Activated CD4-positive, alpha-beta memory T cell treated with anti-CD3 and anti-CD28 coated beads for 36 hours (primary cell): ENCODE measurements at regions of chr3 and their contacts with region 1.

Region 1: DNA sequence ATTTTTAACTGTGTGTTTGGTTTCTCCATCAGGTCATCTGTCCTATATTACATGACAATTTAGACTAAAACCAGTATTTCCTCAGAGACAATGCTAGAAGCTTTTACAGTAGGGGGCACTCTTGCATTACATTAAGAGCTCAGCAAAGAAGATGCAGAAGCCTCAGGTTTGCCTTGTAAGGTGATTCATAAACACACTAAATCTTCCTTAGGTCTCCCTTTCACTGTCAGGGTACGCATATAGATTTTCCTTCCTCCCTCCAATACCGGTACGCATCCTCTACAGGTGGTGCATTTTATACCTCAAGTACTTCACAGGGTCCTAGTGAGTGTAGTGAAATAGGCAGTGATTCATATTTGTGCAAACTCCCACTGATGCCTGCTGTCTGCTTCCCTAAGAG is 46.5 kb downstream of the CD86 start:
- DNase-seq: no peak
- H3K4me3 Mint-ChIP-seq: peak overlapping the region; percentile 7
- H3K27ac Mint-ChIP-seq: peak overlapping the region; percentile 78
- H3K4me1 Mint-ChIP-seq: peaks cover 45% of the 10 kb centered on the region
- H3K27me3 Mint-ChIP-seq: no peaks in the 10 kb centered on the region

Region 2: DNA sequence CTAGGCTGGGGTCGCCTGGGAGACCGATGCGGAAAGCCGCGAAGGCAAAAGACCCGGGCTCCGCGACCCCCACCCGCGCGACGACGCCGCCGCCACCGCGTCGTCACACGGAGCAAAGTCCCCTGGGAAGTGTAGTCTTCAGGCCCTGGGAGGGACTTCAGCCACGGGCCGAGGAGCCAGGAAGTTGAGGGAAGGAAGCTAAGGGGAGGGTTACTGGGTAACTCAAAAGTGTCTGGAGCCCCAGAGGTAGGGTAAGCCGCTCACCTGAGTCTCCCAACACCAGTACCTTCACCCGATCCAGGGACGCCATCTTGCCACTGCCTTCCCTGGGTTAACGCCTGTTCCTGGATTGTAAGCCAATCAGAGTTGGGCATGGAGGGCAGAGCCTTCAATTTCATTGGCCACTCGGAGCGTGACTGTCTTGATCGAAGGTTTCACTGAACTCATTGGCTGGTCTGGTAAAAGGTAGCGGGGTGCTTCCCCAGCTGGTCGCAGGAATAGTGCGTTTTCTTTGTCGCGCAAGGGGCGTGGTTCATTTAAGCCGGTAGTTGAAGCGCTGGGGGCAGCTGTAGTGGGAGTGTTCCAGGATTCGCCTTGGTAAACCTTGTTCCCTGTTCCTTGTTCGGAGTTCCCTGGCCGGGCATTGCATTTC is 1359.3 kb before region 1 on chr3 and contains the starts of genes GTF2E1 and RABL3:
- CTCF ChIA-PET with region 1: no interaction called
- POLR2A ChIA-PET with region 1: no interaction called
- intact Hi-C with region 1: loop called (anchors 5 kb)
- DNase-seq: peak; percentile 98
- H3K4me3 Mint-ChIP-seq: peak within 1 kb of the TSS; percentile 96
- H3K27ac Mint-ChIP-seq: peak within 1 kb of the TSS; percentile 94
- H3K4me1 Mint-ChIP-seq: peaks cover 28% of the 10 kb centered on the region
- H3K27me3 Mint-ChIP-seq: peaks cover 2% of the 10 kb centered on the region
- total RNA-seq, gene GTF2E1: 18.4 to 19.8 TPM
- total RNA-seq, gene RABL3: 28.7 to 30.0 TPM

Region 3: DNA sequence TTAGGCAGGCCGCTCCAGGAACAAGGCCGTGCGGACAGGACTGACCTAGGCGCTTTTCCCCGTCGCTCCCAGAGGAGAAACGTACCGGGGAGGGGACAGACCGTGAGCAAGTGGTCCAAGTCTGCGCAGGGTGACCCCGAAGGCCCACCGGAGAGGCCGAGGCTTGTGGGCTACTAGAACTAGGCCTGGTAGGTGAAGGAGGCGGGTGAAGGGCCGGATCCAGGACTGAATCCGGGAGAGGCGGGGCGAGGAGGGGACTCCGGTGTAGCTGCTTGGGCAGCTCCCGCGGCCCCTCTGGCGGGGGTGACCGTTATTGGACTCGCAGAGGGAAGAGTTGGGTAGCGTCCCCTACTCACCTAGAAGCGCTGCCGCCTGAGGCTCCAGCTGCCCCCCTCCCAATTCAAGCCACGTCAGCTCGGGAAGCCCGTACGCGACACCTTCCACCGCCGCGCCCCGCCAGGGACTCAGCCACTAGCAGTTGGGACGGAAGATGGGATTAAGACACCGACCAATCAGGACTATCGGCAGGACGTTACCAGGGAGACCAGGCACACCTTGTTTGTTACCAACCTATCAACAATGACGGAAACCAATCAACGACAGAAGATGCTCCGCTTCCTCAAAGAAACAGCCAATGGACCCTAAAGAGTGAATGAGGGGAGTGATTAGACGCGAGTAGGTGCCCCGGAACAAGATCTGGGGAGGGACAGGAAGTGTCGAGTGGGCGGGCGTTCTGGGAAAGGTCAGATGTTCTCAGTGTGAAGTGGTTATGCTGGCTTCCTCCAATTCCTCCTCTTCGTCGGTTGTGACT is 352.2 kb before region 1 on chr3 and contains the start of gene GOLGB1:
- CTCF ChIA-PET with region 1: interaction called, 3 read pairs
- POLR2A ChIA-PET with region 1: no interaction called
- intact Hi-C with region 1: loop called (anchors 1 kb)
- DNase-seq: peak; percentile 97
- H3K4me3 Mint-ChIP-seq: no peak within 1 kb of the TSS
- H3K27ac Mint-ChIP-seq: no peak within 1 kb of the TSS
- H3K4me1 Mint-ChIP-seq: peaks cover 10% of the 10 kb centered on the region
- H3K27me3 Mint-ChIP-seq: no peaks in the 10 kb centered on the region
- total RNA-seq, gene GOLGB1: 22.7 to 26.0 TPM

Region 4: GRCh38 chr3:122123850-122124249 is 22.2 kb after region 1 on chr3:
- CTCF ChIA-PET with region 1: no interaction called
- POLR2A ChIA-PET with region 1: no interaction called
- intact Hi-C with region 1: loop called (anchors 2 kb)
- DNase-seq: peak; percentile 45
- H3K4me3 Mint-ChIP-seq: no peak overlapping the region
- H3K27ac Mint-ChIP-seq: peak overlapping the region; percentile 31
- H3K4me1 Mint-ChIP-seq: peaks cover 17% of the 10 kb centered on the region
- H3K27me3 Mint-ChIP-seq: peaks cover 10% of the 10 kb centered on the region

Region 5: DNA sequence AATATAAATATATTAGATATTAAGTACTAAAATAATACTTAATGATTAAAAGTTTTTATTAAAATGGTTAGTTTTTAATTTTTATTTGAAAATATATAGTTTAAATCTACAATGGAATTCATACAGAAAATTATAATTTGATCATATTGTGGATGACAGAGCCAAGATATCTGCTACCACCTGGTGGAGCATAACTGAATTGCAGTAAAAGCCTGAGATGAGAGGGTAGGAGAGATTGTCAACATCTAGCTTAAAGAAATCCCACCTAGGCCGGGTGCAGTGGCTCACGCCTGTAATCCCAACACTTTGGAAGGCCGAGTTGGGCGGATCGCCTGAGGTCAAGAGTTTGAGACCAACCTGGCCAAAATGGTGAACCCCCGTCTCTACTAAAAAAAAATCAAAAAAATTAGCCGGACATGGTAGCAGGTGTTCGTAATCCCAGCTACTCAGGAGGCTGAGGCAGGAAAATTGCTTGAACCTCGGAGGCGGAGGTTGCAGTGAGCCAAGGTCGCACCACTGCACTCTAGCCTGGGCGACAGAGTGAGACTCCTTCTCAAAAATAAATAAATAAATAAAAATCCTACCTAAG is 198.3 kb after region 1 on chr3:
- CTCF ChIA-PET with region 1: interaction called, 12 read pairs
- POLR2A ChIA-PET with region 1: interaction called, 6 read pairs
- intact Hi-C with region 1: loop called (anchors 1 kb)
- DNase-seq: no peak
- H3K4me3 Mint-ChIP-seq: no peak overlapping the region
- H3K27ac Mint-ChIP-seq: no peak overlapping the region
- H3K4me1 Mint-ChIP-seq: peaks cover 18% of the 10 kb centered on the region
- H3K27me3 Mint-ChIP-seq: no peaks in the 10 kb centered on the region

Region 6: DNA sequence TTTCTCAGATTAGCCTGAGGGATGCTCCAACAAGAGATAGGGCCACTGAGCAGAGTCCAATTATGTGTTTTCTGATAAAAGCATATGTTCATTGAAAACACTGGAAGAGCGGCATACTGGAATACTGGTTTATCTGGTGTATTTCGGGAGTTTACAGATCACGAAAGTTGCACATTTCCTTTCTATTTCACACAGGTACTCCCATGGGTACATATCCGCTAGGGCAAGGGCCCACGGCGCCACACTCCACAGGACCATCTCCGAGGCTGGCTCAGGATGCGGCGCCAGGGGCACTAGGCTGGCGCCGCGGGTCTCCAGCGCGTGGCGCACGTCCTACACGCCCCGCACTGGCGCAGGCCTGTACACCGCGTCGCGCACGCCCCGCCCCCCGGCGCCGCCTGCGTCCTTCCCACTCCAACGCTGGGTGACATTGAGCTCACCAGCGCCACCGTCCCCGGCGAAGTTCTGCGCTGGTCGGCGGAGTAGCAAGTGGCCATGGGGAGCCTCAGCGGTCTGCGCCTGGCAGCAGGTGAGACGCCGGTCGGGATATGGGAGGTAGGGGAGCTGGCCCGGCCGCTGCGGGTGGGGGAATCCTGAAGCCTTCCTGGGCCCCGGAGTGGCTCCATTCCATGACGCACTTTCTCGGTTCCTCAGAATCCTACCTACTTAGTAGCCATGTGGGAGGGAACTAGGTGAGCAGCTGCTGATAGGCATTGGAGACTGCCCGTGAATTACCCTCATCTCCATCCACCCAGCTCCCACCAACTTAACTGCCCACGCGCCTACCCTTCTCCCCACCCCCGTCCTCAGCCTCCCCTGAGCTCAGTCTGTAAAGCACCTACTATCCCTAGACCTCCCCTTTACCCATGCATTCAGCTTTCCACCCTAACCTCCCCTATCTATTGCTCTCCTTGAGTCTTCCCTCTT is 282.4 kb after region 1 on chr3 and contains the start of gene FAM162A:
- CTCF ChIA-PET with region 1: interaction called, 14 read pairs
- POLR2A ChIA-PET with region 1: no interaction called
- intact Hi-C with region 1: loop called (anchors 1 kb)
- DNase-seq: peak; percentile 95
- H3K4me3 Mint-ChIP-seq: peak within 1 kb of the TSS; percentile 94
- H3K27ac Mint-ChIP-seq: peak within 1 kb of the TSS; percentile 92
- H3K4me1 Mint-ChIP-seq: peaks cover 60% of the 10 kb centered on the region
- H3K27me3 Mint-ChIP-seq: no peaks in the 10 kb centered on the region
- total RNA-seq, gene FAM162A: 99.1 to 102 TPM

Region 7: DNA sequence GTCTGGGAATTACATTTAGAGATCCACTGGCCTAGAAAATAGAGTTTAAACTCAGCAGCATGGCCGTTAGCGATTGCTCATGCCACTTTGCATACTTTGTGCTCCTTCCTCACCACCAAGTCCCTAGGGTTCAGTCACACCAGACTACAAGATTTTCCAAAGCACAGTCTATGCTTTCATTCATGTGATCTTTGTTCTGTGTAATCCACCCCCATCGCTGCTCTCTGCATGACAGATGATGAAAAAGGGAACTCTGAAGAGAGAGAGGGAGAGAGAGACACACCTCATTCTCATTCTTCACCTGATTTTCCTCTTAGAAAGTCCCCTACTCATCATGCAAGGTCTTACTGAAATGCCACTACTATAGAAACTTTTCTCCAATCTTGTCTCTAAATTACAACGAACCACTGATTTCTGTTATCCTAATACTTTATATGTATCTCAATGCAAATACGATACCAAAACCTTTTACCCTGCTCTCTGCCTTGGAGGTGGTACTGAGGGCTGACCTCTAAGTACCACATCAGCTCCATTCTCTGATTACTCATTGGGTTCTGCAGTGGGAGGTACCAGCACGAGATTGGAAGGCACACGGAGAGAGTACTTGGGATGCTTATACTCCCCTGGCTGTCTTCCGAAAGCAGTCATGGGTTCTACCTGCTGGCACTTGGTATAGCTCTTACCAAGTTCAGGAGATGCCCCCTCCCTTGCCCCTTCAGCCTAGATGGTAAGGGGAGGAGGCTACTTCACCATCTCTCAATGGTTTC is 474.7 kb after region 1 on chr3:
- CTCF ChIA-PET with region 1: no interaction called
- POLR2A ChIA-PET with region 1: no interaction called
- intact Hi-C with region 1: loop called (anchors 5 kb)
- DNase-seq: peak; percentile 70
- H3K4me3 Mint-ChIP-seq: peak overlapping the region; percentile 35
- H3K27ac Mint-ChIP-seq: peak overlapping the region; percentile 82
- H3K4me1 Mint-ChIP-seq: peaks cover 61% of the 10 kb centered on the region
- H3K27me3 Mint-ChIP-seq: no peaks in the 10 kb centered on the region